Activated naive CD4-positive, alpha-beta T cell treated with anti-CD3 and anti-CD28 coated beads for 36 hours (primary cell): ENCODE measurements at regions of chr4 and their contacts with region 1.

Region 1: GRCh38 chr4:53908661-53909078 is 155.7 kb downstream of the CHIC2 start:
- DNase-seq: peak; percentile 23
- H3K4me3 Mint-ChIP-seq: no peak overlapping the region
- H3K27ac Mint-ChIP-seq: no peak overlapping the region
- H3K4me1 Mint-ChIP-seq: peaks cover 12% of the 10 kb centered on the region
- H3K27me3 Mint-ChIP-seq: peaks cover 46% of the 10 kb centered on the region

Region 2: DNA sequence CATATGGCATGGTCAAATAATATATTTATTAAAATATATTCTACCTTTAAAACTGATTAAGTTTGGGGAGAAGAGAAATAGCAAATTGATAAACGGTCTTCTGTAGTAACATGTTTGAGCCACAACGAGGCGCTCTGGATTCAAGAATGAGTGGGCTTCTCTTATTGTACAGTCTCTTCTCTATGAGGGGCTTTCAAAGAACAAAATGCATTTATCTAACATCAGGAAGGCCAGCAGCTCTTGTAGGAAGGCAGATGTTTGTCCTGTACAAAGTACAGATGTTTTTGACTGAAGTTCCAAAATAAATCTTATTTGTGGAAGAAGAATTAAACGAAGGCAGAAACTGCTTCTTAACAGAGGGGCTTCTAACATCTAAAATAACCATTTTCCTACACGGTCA is 893.0 kb before region 1 on chr4:
- CTCF ChIA-PET with region 1: no interaction called
- intact Hi-C with region 1: loop called (anchors 5 kb)
- DNase-seq: peak; percentile 49
- H3K4me3 Mint-ChIP-seq: no peak overlapping the region
- H3K27ac Mint-ChIP-seq: no peak overlapping the region
- H3K4me1 Mint-ChIP-seq: peaks cover 36% of the 10 kb centered on the region
- H3K27me3 Mint-ChIP-seq: no peaks in the 10 kb centered on the region

Region 3: DNA sequence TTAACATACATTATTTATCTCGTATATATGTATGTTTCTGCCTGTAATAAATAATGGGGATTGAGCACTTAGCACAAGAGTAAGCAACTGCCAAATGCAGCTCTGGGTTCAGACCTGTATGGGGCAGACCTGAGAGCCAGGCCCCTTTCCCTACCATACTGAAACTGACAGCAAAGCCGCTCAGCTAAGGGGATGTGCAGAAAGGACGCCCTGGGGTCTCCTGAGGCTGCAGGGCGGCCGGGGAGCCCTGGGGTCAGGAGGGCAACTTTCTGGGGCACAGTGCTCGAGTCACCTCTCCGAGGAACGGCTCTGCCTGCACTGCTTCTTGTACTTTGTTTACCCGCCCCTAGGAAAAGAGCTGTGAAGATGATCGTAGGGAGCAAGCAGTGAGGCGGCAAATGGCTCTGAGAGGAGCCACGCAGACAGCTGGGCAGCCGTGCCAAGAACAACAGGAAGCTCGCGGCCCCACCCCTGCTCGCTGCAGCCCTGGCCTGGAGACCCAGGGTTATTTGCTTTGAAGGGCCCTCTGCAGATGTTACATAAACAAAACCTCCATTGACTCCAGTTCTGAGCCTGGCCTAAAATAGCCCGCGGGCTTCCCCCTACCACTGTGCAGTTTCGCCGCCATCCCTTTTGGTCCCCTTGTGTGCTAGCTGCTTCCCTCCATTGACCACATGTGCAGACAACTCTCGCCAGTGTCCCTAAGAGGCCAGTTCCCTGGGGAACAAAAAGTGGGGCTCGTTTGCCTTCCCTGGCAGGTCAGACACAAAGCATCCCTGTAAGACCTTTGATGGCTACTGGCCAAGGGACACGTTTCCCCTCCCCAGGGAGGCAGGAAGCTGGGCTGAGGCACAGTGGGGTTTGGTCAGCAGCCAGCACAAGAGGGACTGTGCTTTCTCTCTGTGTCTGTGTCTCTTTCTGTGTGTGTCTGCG is 206.1 kb before region 1 on chr4:
- CTCF ChIA-PET with region 1: interaction called, 3 read pairs
- intact Hi-C with region 1: loop called (anchors 10 kb)
- DNase-seq: no peak
- H3K4me3 Mint-ChIP-seq: no peak overlapping the region
- H3K27ac Mint-ChIP-seq: no peak overlapping the region
- H3K4me1 Mint-ChIP-seq: peaks cover 12% of the 10 kb centered on the region
- H3K27me3 Mint-ChIP-seq: peaks cover 27% of the 10 kb centered on the region

Region 4: DNA sequence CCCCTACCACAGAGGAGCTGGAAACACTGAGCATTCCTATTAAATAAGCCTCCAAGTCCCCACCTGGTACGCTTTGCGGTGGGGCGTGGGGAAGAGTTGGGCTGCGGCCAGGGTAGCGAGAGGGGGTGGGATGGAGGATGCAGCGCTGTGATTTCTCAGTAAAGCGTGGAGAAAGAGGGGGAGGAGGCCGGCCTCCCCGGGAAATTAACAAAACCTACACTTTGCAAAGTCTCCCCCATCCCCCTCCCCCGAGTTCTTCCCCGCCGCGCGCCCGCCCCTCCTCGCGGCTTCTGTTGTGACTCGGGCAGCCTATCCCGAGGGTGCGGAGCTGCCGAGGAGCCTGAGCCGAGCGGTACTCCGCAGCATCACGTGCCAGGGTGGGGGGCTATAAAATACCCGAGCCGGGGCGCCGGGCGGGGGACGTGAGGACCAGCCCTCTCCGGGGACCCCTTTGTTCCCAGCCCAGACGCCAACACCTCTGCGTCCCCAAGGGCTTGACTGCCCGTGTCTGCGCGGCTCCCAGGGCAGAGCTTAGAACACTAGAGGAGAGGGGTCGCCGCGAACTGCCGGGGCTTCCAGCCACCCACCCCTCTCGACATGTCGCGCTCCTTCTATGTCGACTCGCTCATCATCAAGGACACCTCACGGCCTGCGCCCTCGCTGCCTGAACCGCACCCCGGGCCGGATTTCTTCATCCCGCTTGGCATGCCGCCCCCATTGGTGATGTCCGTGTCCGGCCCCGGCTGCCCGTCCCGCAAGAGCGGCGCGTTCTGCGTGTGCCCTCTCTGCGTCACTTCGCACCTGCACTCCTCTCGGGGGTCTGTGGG is 191.3 kb after region 1 on chr4 and contains the start of gene GSX2:
- CTCF ChIA-PET with region 1: no interaction called
- intact Hi-C with region 1: loop called (anchors 5 kb)
- DNase-seq: peak; percentile 23
- H3K4me3 Mint-ChIP-seq: peak within 1 kb of the TSS; percentile 58
- H3K27ac Mint-ChIP-seq: no peak within 1 kb of the TSS
- H3K4me1 Mint-ChIP-seq: peaks cover 50% of the 10 kb centered on the region
- H3K27me3 Mint-ChIP-seq: peaks cover 85% of the 10 kb centered on the region
- total RNA-seq, gene GSX2: not detected

Region 5: DNA sequence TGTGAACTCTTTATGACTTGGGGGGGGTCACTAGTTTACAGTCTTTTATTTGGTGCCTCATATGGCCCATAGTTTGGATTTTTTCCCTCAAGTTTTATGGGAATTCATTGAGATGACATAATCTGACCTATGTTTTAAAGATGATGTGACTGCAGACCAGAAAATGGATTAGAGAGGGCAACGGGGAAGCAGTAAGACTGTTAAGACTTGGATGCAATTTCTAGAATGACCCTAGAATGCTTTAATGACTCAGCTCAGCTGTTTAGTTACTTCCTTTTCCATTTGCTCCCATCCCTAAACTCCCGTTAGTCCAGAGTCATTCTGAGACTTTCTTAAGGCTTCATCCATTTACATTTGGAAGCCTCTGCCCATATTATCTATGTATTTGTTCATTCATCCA is 260.5 kb after region 1 on chr4:
- CTCF ChIA-PET with region 1: no interaction called
- intact Hi-C with region 1: no loop called
- DNase-seq: no peak
- H3K4me3 Mint-ChIP-seq: no peak overlapping the region
- H3K27ac Mint-ChIP-seq: no peak overlapping the region
- H3K4me1 Mint-ChIP-seq: no peaks in the 10 kb centered on the region
- H3K27me3 Mint-ChIP-seq: peaks cover 19% of the 10 kb centered on the region

Region 6: DNA sequence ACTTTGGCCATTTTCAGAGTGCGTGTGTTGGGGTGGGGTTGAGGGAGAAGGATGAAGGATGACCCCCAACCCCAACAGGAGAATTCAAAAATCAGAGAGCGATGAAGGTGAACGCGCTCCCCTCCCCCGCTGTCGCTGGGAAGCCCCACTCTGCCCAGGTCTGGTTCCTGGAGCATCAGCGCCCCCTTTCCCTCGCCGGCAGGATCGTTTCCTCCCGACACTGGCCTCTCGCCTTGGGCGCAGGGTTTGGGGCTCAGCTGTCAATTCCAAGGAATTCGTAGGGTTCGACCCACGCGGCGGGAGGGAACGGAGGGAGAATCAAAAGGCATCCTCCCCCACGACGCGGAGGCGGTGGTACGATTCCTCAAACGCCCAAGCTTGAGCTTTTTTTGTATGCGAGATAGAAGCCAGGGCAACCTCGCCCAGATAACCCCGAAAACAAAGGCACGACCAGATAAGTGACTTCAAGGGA is 319.4 kb after region 1 on chr4:
- CTCF ChIA-PET with region 1: interaction called, 30 read pairs
- intact Hi-C with region 1: loop called (anchors 1 kb)
- DNase-seq: peak; percentile 79
- H3K4me3 Mint-ChIP-seq: peak overlapping the region; percentile 59
- H3K27ac Mint-ChIP-seq: no peak overlapping the region
- H3K4me1 Mint-ChIP-seq: peaks cover 49% of the 10 kb centered on the region
- H3K27me3 Mint-ChIP-seq: peaks cover 89% of the 10 kb centered on the region